Activated CD4-positive, alpha-beta T cell treated with anti-CD3 and anti-CD28 coated beads for 36 hours (primary cell): ENCODE measurements at regions of chr9 and their contacts with region 1.

Region 1: GRCh38 chr9:114082017-114082762 is 4.1 kb upstream of the AMBP start:
- DNase-seq: peak; percentile 91
- ATAC-seq: peak; percentile 96
- H3K4me3 Mint-ChIP-seq: no peak overlapping the region
- H3K27ac Mint-ChIP-seq: no peak overlapping the region
- H3K4me1 Mint-ChIP-seq: no peaks in the 10 kb centered on the region
- H3K27me3 Mint-ChIP-seq: peaks cover under 1% of the 10 kb centered on the region

Region 2: GRCh38 chr9:112933696-112934095 is 1148.5 kb before region 1 on chr9:
- CTCF ChIA-PET with region 1: no interaction called
- POLR2A ChIA-PET with region 1: no interaction called
- intact Hi-C with region 1: no loop called
- DNase-seq: no peak
- ATAC-seq: no peak
- H3K4me3 Mint-ChIP-seq: no peak overlapping the region
- H3K27ac Mint-ChIP-seq: no peak overlapping the region
- H3K4me1 Mint-ChIP-seq: no peaks in the 10 kb centered on the region
- H3K27me3 Mint-ChIP-seq: peaks cover 15% of the 10 kb centered on the region

Region 3: DNA sequence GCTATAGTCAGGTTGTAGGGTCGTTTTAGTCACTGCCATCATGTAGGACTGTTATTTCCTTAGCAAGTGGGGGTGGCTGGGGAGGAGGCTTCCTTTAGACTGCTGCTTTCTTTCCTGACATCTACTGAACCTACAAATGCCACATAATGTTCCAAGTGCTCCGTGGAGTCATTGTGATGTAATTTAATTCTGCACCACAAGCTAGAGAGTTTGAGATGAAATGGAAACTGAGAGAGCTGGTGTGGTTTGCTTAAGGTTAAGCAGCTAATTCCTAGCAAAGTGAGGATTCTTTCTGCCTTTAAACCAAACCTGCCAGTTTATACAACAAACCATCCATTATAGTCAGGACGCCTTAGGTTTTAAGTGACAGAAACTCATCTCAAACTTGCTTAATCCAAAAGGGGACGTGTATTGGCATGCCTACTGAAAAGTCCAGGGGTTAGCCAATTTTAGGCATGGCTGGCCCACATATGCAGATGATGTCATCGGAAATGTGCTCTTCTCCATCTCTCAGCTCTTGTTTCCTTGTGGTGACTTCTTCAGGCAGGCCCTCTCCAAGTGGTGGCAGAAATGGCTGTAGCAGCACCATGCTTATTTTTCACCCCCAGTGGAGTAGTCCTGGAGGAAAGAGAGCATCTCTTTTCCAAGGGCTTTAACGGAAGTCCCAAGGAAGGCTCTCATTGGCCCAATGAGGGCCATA is 175.6 kb before region 1 on chr9:
- CTCF ChIA-PET with region 1: no interaction called
- POLR2A ChIA-PET with region 1: no interaction called
- intact Hi-C with region 1: no loop called
- DNase-seq: no peak
- ATAC-seq: no peak
- H3K4me3 Mint-ChIP-seq: no peak overlapping the region
- H3K27ac Mint-ChIP-seq: no peak overlapping the region
- H3K4me1 Mint-ChIP-seq: no peaks in the 10 kb centered on the region
- H3K27me3 Mint-ChIP-seq: peaks cover 2% of the 10 kb centered on the region

Region 4: GRCh38 chr9:114016629-114017420 is 65.4 kb before region 1 on chr9:
- CTCF ChIA-PET with region 1: no interaction called
- POLR2A ChIA-PET with region 1: no interaction called
- intact Hi-C with region 1: no loop called
- DNase-seq: no peak
- ATAC-seq: no peak
- H3K4me3 Mint-ChIP-seq: no peak overlapping the region
- H3K27ac Mint-ChIP-seq: no peak overlapping the region
- H3K4me1 Mint-ChIP-seq: no peaks in the 10 kb centered on the region
- H3K27me3 Mint-ChIP-seq: no peaks in the 10 kb centered on the region

Region 5: GRCh38 chr9:114098016-114098935 is 16.1 kb after region 1 on chr9:
- CTCF ChIA-PET with region 1: interaction called, 10 read pairs
- POLR2A ChIA-PET with region 1: no interaction called
- intact Hi-C with region 1: no loop called
- DNase-seq: peak; percentile 71
- ATAC-seq: peak; percentile 86
- H3K4me3 Mint-ChIP-seq: no peak overlapping the region
- H3K27ac Mint-ChIP-seq: no peak overlapping the region
- H3K4me1 Mint-ChIP-seq: no peaks in the 10 kb centered on the region
- H3K27me3 Mint-ChIP-seq: peaks cover 36% of the 10 kb centered on the region

Region 6: GRCh38 chr9:114291064-114291474 is 208.9 kb after region 1 on chr9:
- CTCF ChIA-PET with region 1: interaction called, 45 read pairs
- POLR2A ChIA-PET with region 1: no interaction called
- intact Hi-C with region 1: loop called in 1 of 2 experiments (anchors 1 kb)
- DNase-seq: peak; percentile 83
- ATAC-seq: peak; percentile 42
- H3K4me3 Mint-ChIP-seq: no peak overlapping the region
- H3K27ac Mint-ChIP-seq: no peak overlapping the region
- H3K4me1 Mint-ChIP-seq: no peaks in the 10 kb centered on the region
- H3K27me3 Mint-ChIP-seq: peaks cover 2% of the 10 kb centered on the region